PC-3 (cell line): ENCODE measurements at regions of chr1 and their contacts with region 1.

Region 1: DNA sequence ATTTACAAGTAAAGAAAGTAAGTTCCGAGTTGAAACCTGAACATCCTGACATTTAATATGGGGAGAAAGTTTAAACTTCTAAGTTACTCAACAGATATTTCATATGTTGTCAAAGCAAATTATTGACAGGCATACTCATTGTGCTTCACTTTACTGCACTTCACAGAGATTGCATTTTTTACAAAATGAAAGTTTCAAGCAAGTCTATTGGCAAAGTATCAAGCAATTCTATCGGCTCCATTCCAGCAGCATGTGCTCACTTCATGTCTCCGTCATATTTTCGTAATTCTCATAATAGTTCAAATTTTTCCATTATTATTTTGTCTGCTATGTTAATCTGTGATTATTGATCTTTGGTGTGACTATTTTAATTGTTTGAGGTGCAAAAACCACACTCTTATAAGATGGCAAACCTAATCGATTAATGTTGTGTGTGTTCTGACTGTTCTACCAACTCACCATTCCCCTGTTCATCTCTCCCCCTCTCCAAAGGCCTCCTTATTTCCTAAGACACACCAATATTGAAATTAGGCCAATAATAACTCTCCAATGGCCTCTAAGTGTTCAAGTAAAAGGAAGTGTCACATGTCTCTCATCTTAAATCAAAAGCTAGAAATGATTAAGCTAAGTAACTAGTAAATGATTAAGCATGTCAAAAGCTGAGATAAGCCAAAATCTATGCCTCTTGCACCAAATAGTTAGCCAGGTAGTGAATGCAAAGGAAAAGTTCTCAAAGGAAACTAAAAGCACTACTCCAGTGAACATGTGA is 68.2 kb upstream of the BCL9 start:
- DNase-seq: peak; percentile 74
- ATAC-seq: no peak
- H3K4me3 ChIP-seq: peak overlapping the region; percentile 12; the same call in 1 of the 2 replicates
- H3K27ac ChIP-seq: peak overlapping the region; percentile 31
- H3K4me1 ChIP-seq: peaks cover 51% of the 10 kb centered on the region
- H3K27me3 ChIP-seq: no peaks in the 10 kb centered on the region
- CTCF ChIP-seq: no peak

Region 2: GRCh38 chr1:147292631-147293251 is 180.4 kb before region 1 on chr1:
- CTCF ChIA-PET with region 1: no interaction called
- POLR2A ChIA-PET with region 1: no interaction called
- intact Hi-C with region 1: loop called (anchors 5 kb)
- DNase-seq: peak; percentile 81
- ATAC-seq: peak; percentile 54
- H3K4me3 ChIP-seq: peak overlapping the region; percentile 2
- H3K27ac ChIP-seq: peak overlapping the region; percentile 94
- H3K4me1 ChIP-seq: peaks cover 23% of the 10 kb centered on the region
- H3K27me3 ChIP-seq: no peaks in the 10 kb centered on the region
- CTCF ChIP-seq: no peak

Region 3: GRCh38 chr1:147567594-147568381 is 94.6 kb after region 1 on chr1:
- CTCF ChIA-PET with region 1: no interaction called
- POLR2A ChIA-PET with region 1: no interaction called
- intact Hi-C with region 1: no loop called
- DNase-seq: no peak
- ATAC-seq: no peak
- H3K4me3 ChIP-seq: no peak overlapping the region
- H3K27ac ChIP-seq: no peak overlapping the region
- H3K4me1 ChIP-seq: no peaks in the 10 kb centered on the region
- H3K27me3 ChIP-seq: no peaks in the 10 kb centered on the region
- CTCF ChIP-seq: no peak